ENCODE measurements at regions of chr20 and their contacts with region 1.

Region 1: GRCh38 chr20:51800060-51800794 is 2.1 kb downstream of the SALL4 start:
- DNase-seq: no peak
- H3K4me3 ChIP-seq: peak overlapping the region; percentile 57
- CTCF ChIP-seq: peak; percentile 96

Region 2: GRCh38 chr20:51562332-51563155 is 237.7 kb before region 1 on chr20:
- CTCF ChIA-PET with region 1: no interaction called
- POLR2A ChIA-PET with region 1: no interaction called
- DNase-seq: peak; percentile 67
- H3K4me3 ChIP-seq: peak overlapping the region; percentile 69
- CTCF ChIP-seq: peak; percentile 30

Region 3: GRCh38 chr20:51784299-51784698 is 15.9 kb before region 1 on chr20:
- CTCF ChIA-PET with region 1: interaction called, 52 read pairs
- POLR2A ChIA-PET with region 1: no interaction called
- DNase-seq: no peak
- H3K4me3 ChIP-seq: no peak overlapping the region
- CTCF ChIP-seq: no peak

Region 4: GRCh38 chr20:51811042-51811355 is 10.8 kb after region 1 on chr20:
- CTCF ChIA-PET with region 1: interaction called, 30 read pairs
- POLR2A ChIA-PET with region 1: no interaction called
- DNase-seq: peak; percentile 34
- H3K4me3 ChIP-seq: no peak overlapping the region
- CTCF ChIP-seq: no peak

Region 5: DNA sequence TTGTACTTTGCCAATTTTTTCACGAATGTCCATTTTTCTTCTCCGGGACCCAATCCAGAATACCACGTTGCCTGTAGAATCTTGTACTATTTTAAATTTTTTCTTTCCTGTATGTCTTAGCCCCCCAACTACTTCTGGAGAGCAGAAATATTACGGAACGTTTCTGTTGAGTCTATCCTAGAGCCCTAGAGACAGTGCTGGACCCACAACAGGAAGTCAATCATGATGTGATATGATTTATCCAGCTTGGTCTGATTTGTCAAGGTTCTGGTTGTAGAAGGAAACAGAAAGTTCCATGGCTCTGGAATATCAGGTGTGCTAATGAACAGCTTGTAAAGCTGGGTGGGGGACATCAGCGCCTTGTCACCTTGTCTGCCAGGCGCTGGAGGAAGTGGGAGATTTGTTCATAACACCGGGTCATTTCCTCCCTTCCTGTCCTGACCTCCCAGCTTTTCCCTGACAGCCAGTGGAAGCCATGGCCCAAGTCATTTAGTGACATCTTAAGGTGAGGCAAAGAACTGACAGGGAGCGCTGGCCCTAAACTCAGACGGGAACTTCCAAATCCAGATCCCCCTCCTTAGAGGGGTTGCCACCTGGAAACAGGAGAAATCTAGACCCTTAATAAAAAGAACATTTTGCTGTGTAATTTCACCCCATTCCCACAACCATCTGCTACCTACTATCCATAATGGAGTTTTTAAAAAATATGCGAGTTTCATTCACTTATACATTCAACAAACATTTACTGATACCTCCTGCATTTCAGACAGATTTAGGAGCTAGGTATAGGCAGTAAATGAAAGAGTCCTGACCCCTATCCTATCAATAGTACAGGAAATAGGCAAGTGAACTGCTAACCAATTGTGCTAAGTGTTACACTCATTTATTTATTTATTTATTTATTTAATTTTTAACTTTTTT is 260.8 kb after region 1 on chr20:
- CTCF ChIA-PET with region 1: interaction called, 22 read pairs
- POLR2A ChIA-PET with region 1: no interaction called
- DNase-seq: no peak
- H3K4me3 ChIP-seq: no peak overlapping the region
- CTCF ChIP-seq: peak; percentile 14

Region 6: GRCh38 chr20:52083627-52084232 is 283.5 kb after region 1 on chr20:
- CTCF ChIA-PET with region 1: interaction called, 50 read pairs
- POLR2A ChIA-PET with region 1: no interaction called
- DNase-seq: no peak
- H3K4me3 ChIP-seq: no peak overlapping the region
- CTCF ChIP-seq: peak; percentile 51

Measured in AG04449 (cell line).